ENCODE measurements at regions of chr7 and their contacts with region 1.

Region 1: GRCh38 chr7:155190688-155191087 is 107.0 kb upstream of the INSIG1 start:
- DNase-seq: peak; percentile 35 to 59
- ATAC-seq: peak in 7 of 8 donors; percentile 63 to 81 (median 67)
- H3K4me3 ChIP-seq: peak overlapping the region in 3 of 10 donors; percentile 5 to 18 (median 15)
- H3K27ac ChIP-seq: no peak overlapping the region
- H3K4me1 ChIP-seq: peaks cover 0 to 4% (median 2%) of the 10 kb centered on the region in 9 donors
- H3K27me3 ChIP-seq: peaks cover 0 to 42% (median 13%) of the 10 kb centered on the region in 7 donors
- CTCF ChIP-seq: peak; percentile 77 to 88 (median 83)

Region 2: DNA sequence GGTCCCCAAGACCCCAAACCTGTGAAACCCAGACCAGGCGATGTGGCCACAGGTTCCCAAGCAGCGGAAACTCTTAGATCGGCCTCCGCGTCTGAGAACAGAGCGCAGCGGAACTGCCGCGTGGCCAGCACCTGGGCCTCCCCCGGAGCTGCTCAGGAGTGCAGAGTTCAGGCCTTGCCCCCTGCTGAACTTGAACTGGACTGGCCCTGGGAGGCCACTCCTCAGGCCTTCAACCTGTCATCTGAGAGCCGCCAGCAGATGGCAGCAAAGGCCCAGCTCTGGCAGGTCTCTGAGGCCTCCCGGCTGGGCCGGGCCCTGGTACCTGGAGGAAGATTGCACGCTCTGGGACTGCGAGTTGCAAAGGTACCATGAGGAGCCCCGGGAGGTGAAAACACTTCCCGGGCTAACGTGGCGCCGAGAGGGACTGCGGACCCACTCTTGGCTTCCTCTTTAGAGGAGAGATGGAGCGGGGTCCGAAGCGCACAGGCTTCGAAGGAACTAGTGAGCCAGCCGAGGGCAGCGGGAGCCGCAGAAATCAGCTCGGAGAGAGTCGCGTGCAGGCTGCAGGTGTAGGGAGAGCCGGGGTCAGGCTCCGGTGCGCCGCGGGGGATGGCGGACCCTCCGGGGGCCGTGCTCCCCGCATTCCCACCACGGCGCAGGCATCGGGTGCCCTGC is 276.9 kb before region 1 on chr7:
- intact Hi-C with region 1: loop called in 1 of 10 experiments (anchors 10 kb)
- DNase-seq: peak; percentile 82 to 90
- ATAC-seq: peak; percentile 89 to 96 (median 92)
- H3K4me3 ChIP-seq: peak overlapping the region; percentile 18 to 55 (median 47)
- H3K27ac ChIP-seq: no peak overlapping the region
- H3K4me1 ChIP-seq: peaks cover 0 to 12% (median 10%) of the 10 kb centered on the region in 9 donors
- H3K27me3 ChIP-seq: peaks cover 0 to 58% (median 37%) of the 10 kb centered on the region in 7 donors
- CTCF ChIP-seq: peak; percentile 78 to 97 (median 92)